ENCODE measurements at regions of chr9 and their contacts with region 1.

Region 1: GRCh38 chr9:34484682-34485081 is 26.1 kb downstream of the DNAI1 start:
- DNase-seq: no peak
- ATAC-seq: no peak
- H3K4me3 ChIP-seq: no peak overlapping the region
- H3K27ac ChIP-seq: no peak overlapping the region
- H3K4me1 ChIP-seq: no peaks in the 10 kb centered on the region
- H3K27me3 ChIP-seq: no peaks in the 10 kb centered on the region; the same call in 1 of the 2 replicates
- CTCF ChIP-seq: no peak

Region 2: GRCh38 chr9:34318163-34318790 is 166.4 kb before region 1 on chr9:
- CTCF ChIA-PET with region 1: no interaction called
- POLR2A ChIA-PET with region 1: no interaction called
- in situ Hi-C with region 1: no loop called
- intact Hi-C with region 1: no loop called
- DNase-seq: no peak
- ATAC-seq: 0 out of 2 replicates have a peak, but pooled peaks have one; percentile 12
- H3K4me3 ChIP-seq: no peak overlapping the region
- H3K27ac ChIP-seq: no peak overlapping the region
- H3K4me1 ChIP-seq: no peaks in the 10 kb centered on the region
- H3K27me3 ChIP-seq: no peaks in the 10 kb centered on the region
- CTCF ChIP-seq: no peak

Region 3: DNA sequence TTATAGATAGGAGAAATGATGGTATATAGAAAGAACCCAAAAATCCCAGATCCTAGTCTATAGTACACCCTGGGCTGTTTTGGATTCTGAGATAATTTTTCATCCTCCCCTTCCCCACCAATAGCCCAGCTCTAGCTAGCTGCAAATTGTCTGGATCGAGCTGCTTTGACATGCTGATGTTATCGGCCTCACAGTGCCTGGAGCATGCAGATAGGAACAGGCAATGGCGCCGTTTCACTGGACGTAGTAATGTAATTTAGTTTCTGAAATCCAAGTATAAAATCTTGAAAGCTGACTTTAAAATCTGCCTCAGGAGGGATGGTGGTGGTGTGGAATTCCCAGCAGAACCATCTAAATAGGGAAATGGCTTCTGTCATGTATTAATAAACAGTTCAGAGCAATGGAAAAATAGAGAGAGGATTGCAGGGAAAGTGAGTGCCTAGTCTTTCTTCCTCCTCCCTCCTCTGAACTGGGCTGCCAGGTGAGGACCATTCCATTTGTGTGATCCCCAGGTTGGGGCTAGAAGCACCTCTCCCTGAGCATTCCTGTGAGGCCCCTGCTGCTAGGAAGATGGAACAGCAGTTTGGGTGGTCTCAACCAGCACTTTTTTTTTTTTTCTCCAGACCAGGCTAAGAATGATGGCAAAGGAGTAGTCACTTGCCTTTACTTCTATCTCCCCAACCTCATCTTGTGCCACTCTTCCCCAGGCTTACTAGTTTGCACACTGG is 58.2 kb before region 1 on chr9:
- CTCF ChIA-PET with region 1: no interaction called
- POLR2A ChIA-PET with region 1: no interaction called
- in situ Hi-C with region 1: no loop called
- intact Hi-C with region 1: no loop called
- DNase-seq: no peak
- ATAC-seq: no peak
- H3K4me3 ChIP-seq: no peak overlapping the region
- H3K27ac ChIP-seq: no peak overlapping the region
- H3K4me1 ChIP-seq: no peaks in the 10 kb centered on the region; the same call in 1 of the 2 replicates
- H3K27me3 ChIP-seq: no peaks in the 10 kb centered on the region
- CTCF ChIP-seq: no peak

Region 4: GRCh38 chr9:34465468-34465867 is 19.2 kb before region 1 on chr9:
- CTCF ChIA-PET with region 1: no interaction called
- POLR2A ChIA-PET with region 1: no interaction called
- in situ Hi-C with region 1: no loop called
- intact Hi-C with region 1: loop called (anchors 2 kb)
- DNase-seq: no peak
- ATAC-seq: no peak
- H3K4me3 ChIP-seq: no peak overlapping the region
- H3K27ac ChIP-seq: no peak overlapping the region
- H3K4me1 ChIP-seq: no peaks in the 10 kb centered on the region
- H3K27me3 ChIP-seq: no peaks in the 10 kb centered on the region
- CTCF ChIP-seq: no peak